ENCODE measurements at regions of chr2 and their contacts with region 1.

Region 1: GRCh38 chr2:98385050-98385699 is 38.9 kb downstream of the CNGA3 start:
- DNase-seq: peak; percentile 84
- CTCF ChIP-seq: peak; percentile 97

Region 2: DNA sequence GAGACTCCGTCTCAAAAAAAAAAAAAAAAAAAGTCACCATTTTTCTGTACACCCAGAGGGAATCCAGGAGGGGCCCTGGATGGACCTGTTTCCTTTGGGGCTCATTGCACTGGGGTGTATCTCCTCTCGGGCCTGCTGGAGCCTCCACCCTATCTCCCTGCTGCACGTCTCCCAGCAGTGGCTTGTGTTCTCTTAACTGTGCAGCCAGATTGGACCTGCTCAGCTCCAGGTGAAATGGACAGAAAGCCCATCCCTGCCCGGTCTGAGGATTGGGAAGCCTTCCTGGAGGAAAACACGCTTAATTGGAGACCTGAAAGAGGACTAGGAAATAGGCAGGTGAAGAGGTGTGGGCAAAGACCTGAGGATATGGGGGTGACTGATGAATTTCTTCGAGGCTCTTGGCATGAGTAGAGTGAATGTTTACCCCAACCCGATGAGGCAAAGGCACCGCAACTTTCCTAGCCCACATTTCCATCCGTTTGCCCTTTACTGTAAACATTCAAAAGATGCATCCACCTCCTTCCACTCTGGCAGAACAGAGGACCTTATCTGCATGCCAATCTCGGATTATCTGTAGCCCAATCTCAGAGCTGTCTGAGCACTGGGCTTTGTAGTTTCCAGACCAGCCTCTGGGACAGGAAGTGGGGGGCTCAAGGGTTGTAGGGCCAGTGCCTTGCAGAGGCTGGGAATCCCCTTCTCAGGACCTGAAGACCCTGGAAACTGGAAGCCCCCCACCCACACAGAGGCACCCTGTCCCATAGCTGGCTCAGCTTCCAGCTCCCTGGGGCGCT is 674.4 kb before region 1 on chr2:
- CTCF ChIA-PET with region 1: interaction called, 43 read pairs
- POLR2A ChIA-PET with region 1: no interaction called
- DNase-seq: no peak
- CTCF ChIP-seq: no peak

Region 3: DNA sequence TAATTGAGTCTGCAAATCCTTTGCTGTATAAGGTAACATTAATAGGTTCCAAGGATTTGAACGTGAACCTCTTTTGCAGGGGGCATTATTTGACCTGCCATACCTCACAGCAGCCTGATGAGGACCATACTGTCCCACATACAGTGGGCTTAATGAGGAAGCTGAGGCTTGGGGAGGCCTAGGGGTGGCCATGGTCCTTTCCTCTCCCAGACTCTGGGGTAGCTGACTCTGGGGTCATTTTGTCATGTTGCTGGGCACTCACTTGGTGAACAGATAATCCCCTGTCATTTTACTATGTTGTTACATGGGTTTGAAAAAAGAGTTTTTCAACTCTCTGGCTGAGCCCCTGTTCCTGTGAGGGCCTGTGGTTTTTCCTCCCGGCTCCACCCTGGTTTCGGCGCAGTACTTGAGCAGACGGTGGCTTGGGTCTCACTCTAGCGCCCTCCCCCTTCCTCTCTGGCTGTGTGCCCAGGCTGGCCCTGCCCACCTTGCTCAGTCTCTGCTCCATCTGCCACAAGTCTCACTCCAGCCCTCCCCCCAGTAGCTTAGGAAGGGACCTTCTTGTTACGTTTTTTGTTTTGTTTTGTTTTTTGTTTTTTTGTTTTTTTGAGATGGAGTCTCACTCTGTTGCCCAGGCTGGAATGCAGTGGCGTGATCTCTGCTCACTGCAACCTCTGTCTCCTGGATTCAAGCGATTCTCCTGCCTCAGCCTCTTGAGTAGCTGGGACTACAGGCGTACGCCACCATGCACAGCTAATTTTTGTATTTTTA is 80.5 kb after region 1 on chr2:
- CTCF ChIA-PET with region 1: no interaction called
- POLR2A ChIA-PET with region 1: no interaction called
- DNase-seq: no peak
- CTCF ChIP-seq: no peak